ENCODE measurements at regions of chr11 and their contacts with region 1.

Region 1: GRCh38 chr11:9314291-9315036 is at the start of gene TMEM41B:
- DNase-seq: peak; percentile 98 to 100 (median 100)
- ATAC-seq: peak; percentile 96 to 99 (median 96)
- H3K4me3 ChIP-seq: peak within 1 kb of the TSS; percentile 92 to 95
- H3K4me3 Mint-ChIP-seq: peak within 1 kb of the TSS; percentile 94 to 100 (median 99)
- H3K27ac ChIP-seq: peak within 1 kb of the TSS; percentile 85
- H3K27ac Mint-ChIP-seq: peak within 1 kb of the TSS; percentile 99
- H3K4me1 ChIP-seq: peaks cover 15 to 26% of the 10 kb centered on the region in 2 experiments
- H3K4me1 Mint-ChIP-seq: peaks cover 37 to 46% (median 40%) of the 10 kb centered on the region in 3 donors
- H3K27me3 ChIP-seq: peaks cover 0 to 5% of the 10 kb centered on the region in 2 experiments
- H3K27me3 Mint-ChIP-seq: peaks cover 8 to 16% of the 10 kb centered on the region in 2 donors
- total RNA-seq, gene TMEM41B: 29.0 to 55.6 (median 42.7) TPM

Region 2: GRCh38 chr11:9219572-9219971 is 94.9 kb before region 1 on chr11:
- CTCF ChIA-PET with region 1: no interaction called
- POLR2A ChIA-PET with region 1: interaction called in 1 of 2 experiments, 10 read pairs
- DNase-seq: no peak
- ATAC-seq: no peak
- H3K4me3 ChIP-seq: no peak overlapping the region
- H3K4me3 Mint-ChIP-seq: no peak overlapping the region
- H3K27ac ChIP-seq: no peak overlapping the region
- H3K27ac Mint-ChIP-seq: no peak overlapping the region
- H3K4me1 ChIP-seq: peaks cover 2 to 10% of the 10 kb centered on the region in 2 experiments
- H3K4me1 Mint-ChIP-seq: peaks cover 35 to 40% (median 38%) of the 10 kb centered on the region in 3 donors
- H3K27me3 ChIP-seq: no peaks in the 10 kb centered on the region
- H3K27me3 Mint-ChIP-seq: no peaks in the 10 kb centered on the region

Region 3: GRCh38 chr11:9301720-9302119 is 12.7 kb before region 1 on chr11:
- CTCF ChIA-PET with region 1: no interaction called
- POLR2A ChIA-PET with region 1: interaction called, 6 to 13 read pairs
- DNase-seq: no peak
- ATAC-seq: no peak
- H3K4me3 ChIP-seq: no peak overlapping the region
- H3K4me3 Mint-ChIP-seq: no peak overlapping the region
- H3K27ac ChIP-seq: no peak overlapping the region
- H3K27ac Mint-ChIP-seq: peak overlapping the region in 1 of 2 donors; percentile 22
- H3K4me1 ChIP-seq: no peaks in the 10 kb centered on the region
- H3K4me1 Mint-ChIP-seq: peaks cover 11 to 16% (median 14%) of the 10 kb centered on the region in 3 donors
- H3K27me3 ChIP-seq: no peaks in the 10 kb centered on the region
- H3K27me3 Mint-ChIP-seq: no peaks in the 10 kb centered on the region

Region 4: DNA sequence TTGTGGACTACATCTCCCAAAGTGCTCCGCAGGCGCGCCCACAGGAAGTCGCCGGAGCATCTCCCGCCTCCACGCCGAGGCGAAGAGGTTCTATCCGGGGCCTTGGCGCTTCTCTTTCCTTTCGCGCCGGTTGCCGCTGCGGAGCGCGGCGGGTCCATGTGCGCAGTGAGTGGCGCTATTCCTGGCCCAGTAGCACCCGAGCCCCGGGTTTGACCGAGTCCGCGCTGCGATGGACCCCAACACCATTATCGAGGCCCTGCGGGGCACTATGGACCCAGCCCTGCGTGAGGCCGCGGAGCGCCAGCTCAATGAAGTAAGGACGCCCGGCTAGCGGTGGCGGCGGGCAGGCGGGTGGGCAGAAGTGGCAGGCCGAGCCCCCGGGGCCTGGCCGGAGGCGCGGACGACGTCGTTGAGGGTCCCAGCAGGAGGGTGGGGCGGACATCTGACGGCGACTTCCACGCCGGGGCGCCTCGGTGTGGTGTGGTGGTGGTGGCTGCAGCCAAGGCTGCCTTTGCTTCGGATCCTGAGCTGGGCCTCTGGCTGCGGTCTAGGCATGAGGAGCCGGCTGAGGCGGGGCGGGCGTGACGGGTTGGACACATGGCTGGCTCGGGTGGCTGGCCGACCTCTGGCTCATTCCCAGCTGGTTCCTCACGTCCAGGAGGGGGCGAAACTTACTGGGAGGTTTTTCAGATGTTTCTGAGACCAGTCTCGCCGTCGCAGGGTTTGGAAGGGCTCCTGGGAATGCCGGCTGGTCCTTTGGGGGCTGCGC is 70.3 kb after region 1 on chr11 and contains the start of gene IPO7:
- CTCF ChIA-PET with region 1: interaction called in 1 of 2 experiments, 7 read pairs
- POLR2A ChIA-PET with region 1: interaction called, 3 to 10 read pairs
- DNase-seq: peak; percentile 68 to 91 (median 84)
- ATAC-seq: peak; percentile 98 to 99 (median 99)
- H3K4me3 ChIP-seq: peak within 1 kb of the TSS; percentile 76 to 82
- H3K4me3 Mint-ChIP-seq: peak within 1 kb of the TSS; percentile 93 to 96 (median 93)
- H3K27ac ChIP-seq: peak within 1 kb of the TSS; percentile 54
- H3K27ac Mint-ChIP-seq: peak within 1 kb of the TSS; percentile 84 to 90
- H3K4me1 ChIP-seq: peaks cover 15 to 25% of the 10 kb centered on the region in 2 experiments
- H3K4me1 Mint-ChIP-seq: peaks cover 40 to 42% (median 41%) of the 10 kb centered on the region in 3 donors
- H3K27me3 ChIP-seq: peaks cover 0 to 2% of the 10 kb centered on the region in 2 experiments
- H3K27me3 Mint-ChIP-seq: no peaks in the 10 kb centered on the region
- total RNA-seq, gene IPO7: 53.3 to 72.8 (median 61.2) TPM